ENCODE measurements at regions of chr5 and their contacts with region 1.

Region 1: GRCh38 chr5:156934450-156935211 is 28.4 kb downstream of the TIMD4 start:
- DNase-seq: no peak
- ATAC-seq: peak; percentile 53
- H3K4me3 ChIP-seq: no peak overlapping the region
- H3K27ac ChIP-seq: no peak overlapping the region; the same call in none of the 2 replicates
- H3K4me1 ChIP-seq: peaks cover 29% of the 10 kb centered on the region
- H3K27me3 ChIP-seq: no peaks in the 10 kb centered on the region
- CTCF ChIP-seq: peak; percentile 78 to 85 (median 78)
- EP300 ChIP-seq: no peak
- POLR2A ChIP-seq: no peak
- RAD21 ChIP-seq: peak; percentile 96

Region 2: DNA sequence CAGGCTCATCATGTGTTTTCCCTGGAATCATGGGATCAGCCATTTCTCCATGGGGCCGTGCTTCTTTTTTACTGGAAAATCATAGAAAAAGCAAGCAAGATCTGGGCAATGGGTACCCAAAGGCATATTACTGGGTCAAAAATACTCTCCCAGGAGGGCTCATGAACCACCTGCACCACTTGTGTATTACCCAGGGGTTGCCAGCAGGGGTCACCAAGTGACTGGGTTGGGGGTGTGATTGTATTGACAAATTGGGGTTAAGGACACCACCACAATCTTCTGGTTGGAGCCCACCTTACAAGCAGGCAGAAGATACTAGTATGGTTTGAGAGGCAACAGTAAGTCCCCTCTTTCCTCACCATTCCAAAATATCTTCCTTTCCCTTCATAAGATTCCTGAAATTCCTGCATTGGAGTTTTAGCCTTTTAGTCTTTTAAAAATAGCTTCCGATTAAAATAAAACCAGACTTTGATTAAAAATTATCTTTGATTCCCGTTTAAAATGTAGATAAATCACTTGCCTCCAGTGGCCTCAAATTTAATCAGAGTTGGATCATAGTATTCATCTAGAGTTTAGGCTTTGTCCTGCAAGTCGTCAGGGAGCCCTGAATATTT is 1317.7 kb before region 1 on chr5:
- CTCF ChIA-PET with region 1: no interaction called
- POLR2A ChIA-PET with region 1: no interaction called
- RAD21 ChIA-PET with region 1: no interaction called
- SMC1A ChIA-PET with region 1: no interaction called
- in situ Hi-C with region 1: no loop called
- intact Hi-C with region 1: loop called (anchors 5 kb)
- DNase-seq: no peak
- ATAC-seq: peak; percentile 84
- H3K4me3 ChIP-seq: no peak overlapping the region
- H3K27ac ChIP-seq: no peak overlapping the region
- H3K4me1 ChIP-seq: no peaks in the 10 kb centered on the region
- H3K27me3 ChIP-seq: no peaks in the 10 kb centered on the region
- CTCF ChIP-seq: peak; percentile 65 to 80 (median 73)
- EP300 ChIP-seq: no peak
- POLR2A ChIP-seq: no peak
- RAD21 ChIP-seq: peak; percentile 87

Region 3: DNA sequence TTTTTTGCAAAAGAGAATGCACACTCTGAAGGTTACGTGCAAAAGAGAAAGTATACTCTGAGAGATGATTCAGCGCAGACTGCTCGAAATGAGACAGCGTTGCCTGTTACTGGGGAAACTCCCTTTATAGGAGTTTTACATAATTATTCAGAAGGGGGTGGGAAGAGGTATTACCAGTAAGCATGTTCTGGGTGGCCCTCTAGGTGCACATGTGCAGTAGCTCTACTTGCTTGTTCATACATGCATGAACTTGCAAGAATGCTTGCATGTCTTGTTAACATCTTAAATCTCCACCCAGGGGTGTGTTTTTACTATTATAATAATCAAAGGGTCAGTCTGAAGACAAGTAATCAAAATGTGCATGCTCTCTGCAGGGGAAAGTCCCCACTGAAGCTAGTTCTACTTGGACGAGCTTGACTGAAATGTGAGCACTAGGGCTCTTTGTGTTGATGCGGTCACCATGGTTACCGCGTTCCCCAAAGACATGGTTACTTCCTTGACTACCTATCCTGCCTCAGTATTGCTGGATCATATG is 532.2 kb before region 1 on chr5:
- CTCF ChIA-PET with region 1: no interaction called
- POLR2A ChIA-PET with region 1: no interaction called
- RAD21 ChIA-PET with region 1: interaction called, 7 read pairs
- SMC1A ChIA-PET with region 1: no interaction called
- in situ Hi-C with region 1: no loop called
- intact Hi-C with region 1: loop called (anchors 10 kb)
- DNase-seq: peak; percentile 87
- ATAC-seq: peak; percentile 96
- H3K4me3 ChIP-seq: peak overlapping the region; percentile 24; the same call in 1 of the 2 replicates
- H3K27ac ChIP-seq: no peak overlapping the region; the same call in 1 of the 2 replicates
- H3K4me1 ChIP-seq: peaks cover 15% of the 10 kb centered on the region
- H3K27me3 ChIP-seq: no peaks in the 10 kb centered on the region
- CTCF ChIP-seq: no peak
- EP300 ChIP-seq: peak; percentile 26 to 56; a peak in 1 of 4 replicates
- POLR2A ChIP-seq: no peak
- RAD21 ChIP-seq: 0 out of 2 replicates have a peak, but pooled peaks have one; percentile 27

Region 4: GRCh38 chr5:156815988-156816599 is 118.5 kb before region 1 on chr5:
- CTCF ChIA-PET with region 1: interaction called, 10 read pairs
- POLR2A ChIA-PET with region 1: no interaction called
- RAD21 ChIA-PET with region 1: interaction called, 6 read pairs
- SMC1A ChIA-PET with region 1: interaction called, 7 read pairs
- in situ Hi-C with region 1: no loop called
- intact Hi-C with region 1: no loop called
- DNase-seq: no peak
- ATAC-seq: peak; percentile 79
- H3K4me3 ChIP-seq: no peak overlapping the region
- H3K27ac ChIP-seq: no peak overlapping the region
- H3K4me1 ChIP-seq: peaks cover 7% of the 10 kb centered on the region; the same call in 1 of the 2 replicates
- H3K27me3 ChIP-seq: no peaks in the 10 kb centered on the region
- CTCF ChIP-seq: peak; percentile 50 to 71 (median 53)
- EP300 ChIP-seq: no peak
- POLR2A ChIP-seq: no peak
- RAD21 ChIP-seq: peak; percentile 85

Region 5: DNA sequence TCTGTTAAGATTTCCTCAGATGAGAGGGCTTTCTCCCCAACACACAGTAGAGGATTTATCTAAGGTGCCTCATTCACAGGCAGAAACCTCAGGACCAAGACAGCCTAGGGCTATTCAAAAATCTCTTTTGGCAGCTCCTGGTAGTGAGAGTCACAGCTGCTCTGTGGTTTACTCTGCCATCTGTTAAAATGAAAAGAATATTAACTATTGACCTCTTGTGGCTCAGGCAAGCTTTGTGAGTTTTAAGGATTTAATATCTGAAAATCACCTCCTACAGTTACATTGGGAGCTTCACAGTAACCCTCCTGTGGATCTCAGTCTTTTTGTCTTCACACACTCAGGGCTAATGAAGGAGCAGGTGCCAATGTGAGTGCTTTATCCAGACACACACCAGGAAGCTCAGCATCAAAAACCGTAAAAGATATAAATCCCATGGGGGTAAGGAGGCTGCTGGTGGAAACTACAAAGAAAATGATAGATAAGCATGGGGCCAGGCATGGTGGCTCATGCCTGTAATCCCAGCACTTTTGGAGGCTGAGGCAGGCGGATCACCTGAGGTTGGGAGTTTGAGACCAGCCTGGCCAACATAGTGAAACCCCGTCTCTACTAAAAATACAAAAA is 54.9 kb before region 1 on chr5:
- CTCF ChIA-PET with region 1: interaction called, 22 read pairs
- POLR2A ChIA-PET with region 1: interaction called, 3 read pairs
- RAD21 ChIA-PET with region 1: interaction called, 7 read pairs
- SMC1A ChIA-PET with region 1: interaction called, 44 read pairs
- in situ Hi-C with region 1: no loop called
- intact Hi-C with region 1: no loop called
- DNase-seq: peak; percentile 39
- ATAC-seq: peak; percentile 85
- H3K4me3 ChIP-seq: no peak overlapping the region
- H3K27ac ChIP-seq: no peak overlapping the region
- H3K4me1 ChIP-seq: peaks cover 3% of the 10 kb centered on the region; the same call in 1 of the 2 replicates
- H3K27me3 ChIP-seq: no peaks in the 10 kb centered on the region
- CTCF ChIP-seq: no peak
- EP300 ChIP-seq: no peak
- POLR2A ChIP-seq: no peak
- RAD21 ChIP-seq: no peak

Region 6: GRCh38 chr5:156920042-156920860 is 14.4 kb before region 1 on chr5:
- CTCF ChIA-PET with region 1: interaction called, 76 read pairs
- POLR2A ChIA-PET with region 1: interaction called, 81 read pairs
- RAD21 ChIA-PET with region 1: interaction called, 82 read pairs
- SMC1A ChIA-PET with region 1: interaction called, 228 read pairs
- in situ Hi-C with region 1: no loop called
- intact Hi-C with region 1: loop called (anchors 1 kb)
- DNase-seq: peak; percentile 77
- ATAC-seq: peak; percentile 68
- H3K4me3 ChIP-seq: peak overlapping the region; percentile 63
- H3K27ac ChIP-seq: peak overlapping the region; percentile 93
- H3K4me1 ChIP-seq: peaks cover 17% of the 10 kb centered on the region
- H3K27me3 ChIP-seq: no peaks in the 10 kb centered on the region
- CTCF ChIP-seq: no peak
- EP300 ChIP-seq: peak; percentile 80 to 88; a peak in 3 of 4 replicates
- POLR2A ChIP-seq: no peak
- RAD21 ChIP-seq: no peak

Region 7: DNA sequence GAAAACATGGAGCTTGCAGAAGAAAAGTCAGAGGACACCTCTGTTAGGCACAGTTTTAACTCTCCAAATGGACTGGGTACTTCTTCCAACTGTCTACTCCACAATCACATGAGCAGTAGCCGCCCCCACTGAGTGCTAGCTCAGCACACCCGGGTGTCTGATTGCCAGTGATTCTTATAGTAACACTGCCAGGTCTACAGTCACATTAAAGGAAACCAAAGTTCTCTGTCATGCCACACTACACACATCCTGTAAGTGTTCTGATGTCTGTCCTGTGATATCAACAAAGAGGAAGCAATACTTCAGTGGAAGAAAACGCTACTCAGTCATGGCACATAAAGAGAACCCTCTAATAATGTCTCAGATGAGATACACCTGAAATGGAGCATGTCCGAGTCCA is 174.3 kb after region 1 on chr5 and contains the start of gene HAVCR2:
- CTCF ChIA-PET with region 1: no interaction called
- POLR2A ChIA-PET with region 1: no interaction called
- RAD21 ChIA-PET with region 1: interaction called, 6 read pairs
- SMC1A ChIA-PET with region 1: interaction called, 12 read pairs
- in situ Hi-C with region 1: no loop called
- intact Hi-C with region 1: loop called (anchors 10 kb)
- DNase-seq: peak; percentile 83
- ATAC-seq: peak; percentile 90
- H3K4me3 ChIP-seq: peak within 1 kb of the TSS; percentile 46
- H3K27ac ChIP-seq: peak within 1 kb of the TSS; percentile 87
- H3K4me1 ChIP-seq: peaks cover 12% of the 10 kb centered on the region
- H3K27me3 ChIP-seq: no peaks in the 10 kb centered on the region
- CTCF ChIP-seq: no peak
- EP300 ChIP-seq: 0 out of 4 replicates have a peak, but pooled peaks of 1 of the 2 experiments have one; percentile 0
- POLR2A ChIP-seq: 0 out of 2 replicates have a peak, but pooled peaks have one; percentile 41
- RAD21 ChIP-seq: no peak
- polyA plus RNA-seq, gene HAVCR2: 7.2 to 7.5 TPM

Measured in GM12878 (cell line).